Activated B cell treated with CpG ODN at 0.5 μM for 24 hours (primary cell): ENCODE measurements at regions of chr13 and their contacts with region 1.

Region 1: GRCh38 chr13:40388617-40389016 is 277.8 kb downstream of the FOXO1 start:
- DNase-seq: peak; percentile 46
- ATAC-seq: peak; percentile 97
- H3K4me3 Mint-ChIP-seq: peak overlapping the region; percentile 83
- H3K27ac Mint-ChIP-seq: peak overlapping the region; percentile 95
- H3K4me1 Mint-ChIP-seq: peaks cover 29% of the 10 kb centered on the region
- H3K27me3 Mint-ChIP-seq: no peaks in the 10 kb centered on the region
- CTCF ChIP-seq: no peak

Region 2: DNA sequence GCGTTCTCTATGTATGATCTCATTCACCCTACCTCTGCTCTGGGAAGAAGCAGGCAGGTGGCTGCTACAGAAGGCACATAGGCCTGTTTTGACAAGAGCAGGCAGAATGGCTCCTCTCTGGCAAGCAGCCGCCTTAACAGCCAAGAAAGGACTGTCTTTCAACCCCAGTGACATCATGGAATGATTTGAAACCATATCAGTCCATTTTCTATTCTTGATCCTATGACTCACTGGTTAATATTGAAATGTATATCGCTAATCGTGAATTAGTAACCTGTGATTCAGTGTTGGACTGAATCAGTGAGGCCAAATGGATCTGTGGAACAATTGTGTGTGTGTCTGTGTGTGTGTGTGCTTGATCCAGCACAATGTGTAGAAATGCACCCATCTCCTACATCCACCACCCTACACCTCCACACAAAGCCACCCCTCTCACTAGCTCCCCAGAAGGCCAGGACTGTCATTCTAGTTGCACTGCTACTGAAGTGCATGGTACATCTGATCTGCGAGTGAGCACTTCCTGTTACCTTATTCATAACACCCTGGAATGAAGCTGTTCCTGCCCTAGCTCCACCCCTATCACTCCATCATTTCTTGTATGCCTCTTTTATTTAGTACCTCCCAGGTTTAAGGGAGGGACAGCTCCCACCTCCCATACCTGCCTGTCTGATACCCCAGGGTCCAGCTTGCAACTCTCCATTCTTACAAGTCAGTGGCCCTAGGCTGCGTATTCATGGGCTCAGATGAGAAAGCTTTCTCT is 182.2 kb before region 1 on chr13:
- CTCF ChIA-PET with region 1: no interaction called
- POLR2A ChIA-PET with region 1: interaction called, 5 read pairs
- intact Hi-C with region 1: loop called (anchors 2 kb)
- DNase-seq: peak; percentile 52
- ATAC-seq: peak; percentile 66
- H3K4me3 Mint-ChIP-seq: peak overlapping the region; percentile 76
- H3K27ac Mint-ChIP-seq: peak overlapping the region; percentile 100
- H3K4me1 Mint-ChIP-seq: peaks cover 72% of the 10 kb centered on the region
- H3K27me3 Mint-ChIP-seq: no peaks in the 10 kb centered on the region
- CTCF ChIP-seq: no peak

Region 3: DNA sequence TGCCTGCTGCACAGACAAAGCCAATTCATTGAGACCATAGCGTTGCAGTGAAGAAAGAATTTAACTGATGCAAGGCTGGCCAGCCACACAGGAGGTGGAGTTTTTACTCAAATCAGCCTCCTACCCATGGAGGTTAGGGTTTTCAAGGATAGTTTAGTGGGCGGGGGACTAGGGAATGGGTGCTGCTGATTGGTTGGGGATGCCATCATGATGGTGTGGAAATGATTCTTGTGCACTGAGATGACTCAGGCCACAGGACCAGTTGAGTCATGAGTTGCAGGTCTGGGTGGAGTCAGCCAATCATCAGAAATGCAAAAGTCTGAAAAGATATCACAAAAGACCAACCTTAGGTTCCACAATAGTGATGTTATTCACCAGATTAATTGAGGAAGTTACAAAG is 81.8 kb before region 1 on chr13:
- CTCF ChIA-PET with region 1: no interaction called
- POLR2A ChIA-PET with region 1: no interaction called
- intact Hi-C with region 1: no loop called
- DNase-seq: no peak
- ATAC-seq: no peak
- H3K4me3 Mint-ChIP-seq: no peak overlapping the region
- H3K27ac Mint-ChIP-seq: no peak overlapping the region
- H3K4me1 Mint-ChIP-seq: no peaks in the 10 kb centered on the region
- H3K27me3 Mint-ChIP-seq: no peaks in the 10 kb centered on the region
- CTCF ChIP-seq: no peak

Region 4: GRCh38 chr13:40371531-40372125 is 17.0 kb before region 1 on chr13:
- CTCF ChIA-PET with region 1: no interaction called
- POLR2A ChIA-PET with region 1: interaction called, 5 read pairs
- intact Hi-C with region 1: loop called (anchors 2 kb)
- DNase-seq: no peak
- ATAC-seq: no peak
- H3K4me3 Mint-ChIP-seq: no peak overlapping the region
- H3K27ac Mint-ChIP-seq: no peak overlapping the region
- H3K4me1 Mint-ChIP-seq: peaks cover 28% of the 10 kb centered on the region
- H3K27me3 Mint-ChIP-seq: no peaks in the 10 kb centered on the region
- CTCF ChIP-seq: no peak

Region 5: GRCh38 chr13:40377783-40378182 is 10.8 kb before region 1 on chr13:
- CTCF ChIA-PET with region 1: no interaction called
- POLR2A ChIA-PET with region 1: interaction called, 5 read pairs
- intact Hi-C with region 1: loop called (anchors 1 kb)
- DNase-seq: no peak
- ATAC-seq: peak; percentile 69
- H3K4me3 Mint-ChIP-seq: no peak overlapping the region
- H3K27ac Mint-ChIP-seq: no peak overlapping the region
- H3K4me1 Mint-ChIP-seq: peaks cover 30% of the 10 kb centered on the region
- H3K27me3 Mint-ChIP-seq: no peaks in the 10 kb centered on the region
- CTCF ChIP-seq: no peak

Region 6: DNA sequence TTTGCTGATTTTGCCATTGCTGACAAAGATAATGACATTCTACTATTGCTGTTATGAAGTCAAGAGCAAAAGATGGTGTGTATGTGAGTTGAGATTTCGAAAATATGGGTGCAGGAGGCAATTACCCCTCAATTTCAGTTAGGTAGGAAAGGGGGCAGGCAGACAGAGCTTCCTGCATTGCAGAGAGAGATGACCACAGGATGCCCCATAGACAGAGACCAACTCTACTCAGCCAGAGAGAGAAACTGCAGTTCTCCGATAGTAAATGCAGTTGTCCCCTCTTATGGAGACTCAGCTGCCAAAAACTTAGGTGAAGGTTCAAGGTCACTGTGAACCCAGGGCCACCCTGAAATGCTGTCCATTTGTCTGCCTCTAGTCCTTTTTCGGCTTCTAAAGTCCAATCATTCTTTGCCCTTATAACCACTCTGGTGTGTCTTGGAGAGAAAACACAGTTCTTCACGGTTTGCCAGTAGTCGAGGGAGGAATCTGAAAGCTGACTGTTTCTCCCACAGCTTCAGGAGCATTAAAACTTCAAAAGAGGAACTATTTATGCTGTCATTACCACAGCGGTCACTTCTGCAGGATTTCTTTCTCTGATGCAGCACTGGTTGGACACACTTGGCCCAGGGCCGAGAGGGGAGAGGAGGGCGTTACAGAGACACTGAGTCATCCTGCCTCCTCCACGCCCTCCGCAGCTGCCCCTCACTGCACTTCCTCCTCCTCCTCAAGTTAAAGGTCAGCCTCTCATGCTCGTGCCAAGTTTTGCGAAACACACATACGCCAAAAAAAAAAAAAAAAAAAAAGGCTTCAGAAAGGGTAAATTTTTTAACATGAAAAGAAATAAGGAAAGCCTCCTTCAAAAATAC is 13.5 kb after region 1 on chr13:
- CTCF ChIA-PET with region 1: no interaction called
- POLR2A ChIA-PET with region 1: interaction called, 8 read pairs
- intact Hi-C with region 1: loop called (anchors 1 kb)
- DNase-seq: peak; percentile 51
- ATAC-seq: peak; percentile 100
- H3K4me3 Mint-ChIP-seq: peak overlapping the region; percentile 71
- H3K27ac Mint-ChIP-seq: peak overlapping the region; percentile 82
- H3K4me1 Mint-ChIP-seq: peaks cover 29% of the 10 kb centered on the region
- H3K27me3 Mint-ChIP-seq: no peaks in the 10 kb centered on the region
- CTCF ChIP-seq: no peak

Region 7: GRCh38 chr13:40433577-40433976 is 45.0 kb after region 1 on chr13:
- CTCF ChIA-PET with region 1: interaction called, 4 read pairs
- POLR2A ChIA-PET with region 1: interaction called, 10 read pairs
- intact Hi-C with region 1: no loop called
- DNase-seq: no peak
- ATAC-seq: peak; percentile 68
- H3K4me3 Mint-ChIP-seq: peak overlapping the region; percentile 60
- H3K27ac Mint-ChIP-seq: peak overlapping the region; percentile 89
- H3K4me1 Mint-ChIP-seq: peaks cover 92% of the 10 kb centered on the region
- H3K27me3 Mint-ChIP-seq: no peaks in the 10 kb centered on the region
- CTCF ChIP-seq: no peak

Region 8: GRCh38 chr13:40470660-40471059 is 82.0 kb after region 1 on chr13:
- CTCF ChIA-PET with region 1: no interaction called
- POLR2A ChIA-PET with region 1: no interaction called
- intact Hi-C with region 1: no loop called
- DNase-seq: no peak
- ATAC-seq: no peak
- H3K4me3 Mint-ChIP-seq: no peak overlapping the region
- H3K27ac Mint-ChIP-seq: no peak overlapping the region
- H3K4me1 Mint-ChIP-seq: peaks cover 12% of the 10 kb centered on the region
- H3K27me3 Mint-ChIP-seq: no peaks in the 10 kb centered on the region
- CTCF ChIP-seq: no peak